ENCODE measurements at regions of chr9 and their contacts with region 1.

Region 1: GRCh38 chr9:98848450-98849149 is 41.1 kb downstream of the GALNT12 start:
- DNase-seq: peak; percentile 95
- H3K4me3 ChIP-seq: no peak overlapping the region
- H3K27ac ChIP-seq: no peak overlapping the region
- H3K4me1 ChIP-seq: peaks cover 4% of the 10 kb centered on the region
- H3K27me3 ChIP-seq: no peaks in the 10 kb centered on the region
- CTCF ChIP-seq: peak; percentile 66 to 85 (median 73)
- POLR2A ChIP-seq: no peak

Region 2: GRCh38 chr9:99140685-99141314 is 292.2 kb after region 1 on chr9:
- intact Hi-C with region 1: loop called (anchors 10 kb)
- DNase-seq: peak; percentile 54
- H3K4me3 ChIP-seq: no peak overlapping the region
- H3K27ac ChIP-seq: no peak overlapping the region
- H3K4me1 ChIP-seq: peaks cover 8% of the 10 kb centered on the region
- H3K27me3 ChIP-seq: no peaks in the 10 kb centered on the region
- CTCF ChIP-seq: peak; percentile 66 to 73 (median 68)
- POLR2A ChIP-seq: no peak